Right cardiac atrium (tissue), 5 donors: ENCODE measurements at regions of chr20 and their contacts with region 1.

Region 1: DNA sequence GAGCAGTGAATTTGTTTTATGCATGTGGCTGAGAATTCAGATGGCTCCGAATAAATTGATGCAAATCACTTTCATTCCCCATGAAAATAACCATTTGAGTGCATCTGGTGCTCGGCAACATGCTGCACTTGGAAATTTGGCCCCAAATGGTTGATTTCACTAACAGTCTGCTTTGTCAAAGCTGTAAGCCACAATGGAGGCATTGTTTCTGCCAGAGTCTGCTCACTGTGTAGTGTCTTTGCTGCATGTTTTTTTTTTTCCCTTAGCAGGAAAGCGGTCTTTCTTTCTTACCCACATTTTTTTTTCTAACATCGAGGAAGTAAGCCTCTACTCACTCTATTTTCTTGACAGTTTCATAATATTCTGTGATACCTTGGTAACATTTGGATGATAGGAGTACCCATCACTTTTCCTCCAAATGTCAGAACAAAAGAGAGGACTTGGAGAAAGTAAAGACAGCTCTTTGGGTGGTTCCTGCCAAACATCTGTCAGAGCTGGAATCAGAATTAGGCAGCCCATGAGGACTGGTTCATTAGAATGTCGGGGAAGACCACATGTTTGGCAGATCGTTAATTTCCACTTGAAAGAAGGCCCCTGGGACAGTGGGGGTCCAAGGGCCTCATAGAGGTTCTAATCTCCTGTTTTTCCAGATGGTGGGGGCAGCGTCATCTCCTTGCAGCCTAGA is 149.5 kb downstream of the DOK5 start:
- DNase-seq: peak in 1 of 3 donors; percentile 47
- ATAC-seq: peak; percentile 68
- H3K4me3 ChIP-seq: no peak overlapping the region
- H3K27ac ChIP-seq: no peak overlapping the region
- H3K4me1 ChIP-seq: peaks cover 3% of the 10 kb centered on the region
- H3K27me3 ChIP-seq: no peaks in the 10 kb centered on the region

Region 2: DNA sequence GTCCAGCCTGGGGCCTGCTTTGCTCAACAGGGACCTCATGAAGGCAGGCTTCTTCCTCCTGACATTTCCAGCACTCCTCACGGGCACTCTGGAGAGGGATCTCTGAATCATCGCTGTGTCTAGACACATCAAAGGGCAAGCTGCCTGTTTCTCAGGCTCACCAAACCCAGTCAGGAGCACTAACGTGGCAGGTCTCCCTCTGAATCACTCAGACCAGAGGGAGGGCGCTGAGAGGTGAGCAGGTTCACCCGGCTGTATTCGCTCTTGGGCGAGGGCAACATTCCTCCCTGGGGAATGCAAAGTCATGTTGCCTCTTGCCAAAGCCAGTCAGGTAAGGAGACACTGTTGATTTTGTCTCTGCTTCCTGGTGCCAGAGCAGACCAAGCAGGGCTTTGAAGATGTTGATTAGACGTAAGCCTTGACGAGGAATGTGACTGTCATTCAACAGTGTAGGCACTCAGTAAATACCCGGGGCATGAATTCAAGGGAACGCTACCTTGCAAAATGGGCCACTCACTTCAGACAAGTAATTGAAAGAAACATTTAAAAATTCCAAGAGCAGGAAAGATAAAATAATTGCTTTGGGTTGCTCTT is 501.2 kb before region 1 on chr20:
- intact Hi-C with region 1: no loop called
- DNase-seq: no peak
- ATAC-seq: peak; percentile 45 to 47
- H3K4me3 ChIP-seq: no peak overlapping the region
- H3K27ac ChIP-seq: no peak overlapping the region
- H3K4me1 ChIP-seq: no peaks in the 10 kb centered on the region
- H3K27me3 ChIP-seq: no peaks in the 10 kb centered on the region

Region 3: DNA sequence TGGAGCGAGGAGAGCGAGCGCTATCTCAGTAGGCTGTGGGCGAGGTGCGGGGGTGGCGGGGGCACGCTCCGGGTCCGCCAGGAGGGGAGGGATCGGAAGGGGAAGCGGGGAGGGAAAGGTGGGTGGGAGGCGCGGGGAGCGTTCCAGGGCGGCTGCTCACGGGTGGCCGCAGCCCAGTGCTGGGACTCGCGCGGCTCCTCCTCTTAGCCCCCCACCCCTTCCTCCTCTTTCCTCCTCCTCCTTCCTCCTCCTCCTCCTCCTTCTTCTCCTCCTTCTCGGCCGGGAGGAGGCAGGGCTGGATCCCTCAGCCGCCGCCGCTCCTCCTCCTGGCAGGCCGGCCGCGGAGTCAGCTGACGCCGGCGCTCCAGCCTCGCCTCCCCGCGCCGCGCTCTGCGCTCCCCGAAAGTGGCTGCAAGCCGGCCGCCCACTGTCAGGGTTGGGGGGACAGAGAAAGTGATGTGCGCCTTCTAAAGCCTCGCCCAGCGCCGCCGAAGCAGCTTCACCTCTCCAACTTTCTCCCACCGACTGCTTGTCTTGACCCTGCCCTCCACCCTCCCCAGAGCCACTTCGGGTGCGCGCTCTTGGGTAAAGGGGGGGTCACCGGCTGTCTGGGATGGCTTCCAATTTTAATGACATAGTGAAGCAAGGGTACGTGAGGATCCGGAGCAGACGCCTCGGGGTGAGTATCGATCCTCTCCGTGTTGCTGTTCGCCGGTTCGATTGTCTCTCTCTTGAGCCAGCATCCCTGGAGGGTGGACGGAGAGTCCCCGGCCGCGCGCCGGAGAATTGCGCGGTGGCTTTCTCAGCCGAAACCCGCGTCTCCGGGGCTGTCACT is 149.3 kb before region 1 on chr20 and contains the start of gene DOK5:
- intact Hi-C with region 1: loop called in 1 of 4 experiments (anchors 10 kb)
- DNase-seq: peak; percentile 75 to 89 (median 86)
- ATAC-seq: peak; percentile 95
- H3K4me3 ChIP-seq: peak within 1 kb of the TSS; percentile 77
- H3K27ac ChIP-seq: no peak within 1 kb of the TSS
- H3K4me1 ChIP-seq: no peaks in the 10 kb centered on the region
- H3K27me3 ChIP-seq: no peaks in the 10 kb centered on the region
- total RNA-seq, gene DOK5: 10.6 to 20.2 (median 16.6) TPM